CD8-positive, alpha-beta T cell (primary cell): ENCODE measurements at regions of chr3 and their contacts with region 1.

Region 1: DNA sequence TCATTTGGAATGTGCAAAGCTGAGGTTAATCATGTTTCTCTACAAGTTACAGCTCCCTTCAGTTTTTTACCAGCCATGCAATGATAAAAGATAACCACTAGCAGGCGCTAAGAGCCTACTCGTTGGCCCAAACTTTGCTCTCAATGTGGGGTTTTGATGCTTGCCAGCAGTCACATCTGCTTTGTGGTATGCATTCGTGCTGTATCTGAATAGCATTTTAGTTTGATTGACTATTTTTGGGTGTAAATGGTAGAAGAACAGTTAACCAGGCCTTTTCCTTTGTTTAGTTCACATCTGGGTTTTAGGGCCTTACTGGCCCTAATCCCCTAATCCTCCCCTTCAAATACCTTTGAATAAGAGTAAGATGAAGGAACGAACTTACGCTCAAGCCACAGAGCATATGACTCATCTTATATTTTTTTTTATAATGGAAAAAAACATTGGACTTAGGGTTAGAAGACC is 4.4 kb upstream of the CLDN11 start:
- DNase-seq: peak in 6 of 9 experiments; percentile 6 to 64 (median 36)
- ATAC-seq: peak; percentile 75
- H3K4me3 ChIP-seq: no peak overlapping the region
- H3K4me3 Mint-ChIP-seq: no peak overlapping the region
- H3K27ac ChIP-seq: no peak overlapping the region
- H3K27ac Mint-ChIP-seq: no peak overlapping the region
- H3K4me1 ChIP-seq: peaks cover 7% of the 10 kb centered on the region
- H3K4me1 Mint-ChIP-seq: peaks cover 8% of the 10 kb centered on the region
- H3K27me3 ChIP-seq: peaks cover 5 to 8% of the 10 kb centered on the region in 2 experiments
- H3K27me3 Mint-ChIP-seq: peaks cover 23% of the 10 kb centered on the region
- CTCF ChIP-seq: peak; percentile 97

Region 2: GRCh38 chr3:169278092-169278491 is 1136.1 kb before region 1 on chr3:
- CTCF ChIA-PET with region 1: no interaction called
- POLR2A ChIA-PET with region 1: no interaction called
- intact Hi-C with region 1: no loop called
- DNase-seq: no peak
- ATAC-seq: no peak
- H3K4me3 ChIP-seq: no peak overlapping the region
- H3K4me3 Mint-ChIP-seq: no peak overlapping the region
- H3K27ac ChIP-seq: no peak overlapping the region
- H3K27ac Mint-ChIP-seq: no peak overlapping the region
- H3K4me1 ChIP-seq: no peaks in the 10 kb centered on the region
- H3K4me1 Mint-ChIP-seq: no peaks in the 10 kb centered on the region
- H3K27me3 ChIP-seq: no peaks in the 10 kb centered on the region
- H3K27me3 Mint-ChIP-seq: no peaks in the 10 kb centered on the region
- CTCF ChIP-seq: no peak

Region 3: GRCh38 chr3:170178651-170179050 is 235.6 kb before region 1 on chr3:
- CTCF ChIA-PET with region 1: no interaction called
- POLR2A ChIA-PET with region 1: no interaction called
- intact Hi-C with region 1: no loop called
- DNase-seq: peak; percentile 32 to 79 (median 61)
- ATAC-seq: peak; percentile 53
- H3K4me3 ChIP-seq: peak overlapping the region in 1 of 2 experiments; percentile 14
- H3K4me3 Mint-ChIP-seq: peak overlapping the region; percentile 66
- H3K27ac ChIP-seq: peak overlapping the region in 1 of 2 experiments; percentile 99
- H3K27ac Mint-ChIP-seq: peak overlapping the region; percentile 85
- H3K4me1 ChIP-seq: peaks cover 43% of the 10 kb centered on the region
- H3K4me1 Mint-ChIP-seq: peaks cover 54% of the 10 kb centered on the region
- H3K27me3 ChIP-seq: no peaks in the 10 kb centered on the region
- H3K27me3 Mint-ChIP-seq: no peaks in the 10 kb centered on the region
- CTCF ChIP-seq: no peak

Region 4: DNA sequence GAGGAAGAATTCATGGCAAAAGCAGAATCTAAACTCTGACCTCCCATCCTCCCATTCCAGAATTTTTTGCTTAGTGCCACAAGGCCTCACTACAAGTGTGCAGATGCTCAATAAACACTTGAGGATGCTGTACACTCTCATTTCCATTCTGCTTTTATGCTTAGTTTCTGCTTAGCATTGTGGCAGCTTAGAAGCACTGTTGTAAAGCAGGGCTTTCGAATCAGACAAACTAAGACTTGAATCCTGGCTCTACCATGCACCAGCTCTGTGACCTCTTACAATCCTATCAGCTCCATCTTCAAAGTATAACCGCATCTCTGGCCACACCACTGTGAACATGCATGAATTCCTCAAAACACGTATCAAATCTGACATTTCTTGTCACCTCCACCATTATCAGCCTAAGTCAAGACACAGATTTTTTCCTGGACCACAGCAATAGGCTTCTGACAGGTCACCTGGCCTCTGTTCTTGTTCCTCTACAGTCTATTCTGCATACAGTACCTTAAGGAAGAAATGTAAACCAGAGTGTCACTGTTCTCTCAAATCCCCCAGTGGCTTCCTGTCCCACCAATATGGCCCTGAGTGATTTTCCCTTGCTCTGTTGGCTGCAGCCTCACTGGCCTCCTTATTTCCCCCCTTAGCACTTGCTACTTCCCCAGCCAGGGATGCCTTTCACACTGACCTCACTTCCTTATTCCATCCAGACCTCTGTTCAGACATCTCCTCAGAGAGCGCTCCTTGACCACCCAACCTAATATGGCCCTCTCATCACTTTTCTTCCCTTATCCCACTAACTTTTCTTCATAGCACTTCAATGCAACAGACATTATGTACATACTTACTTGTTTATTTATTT is 224.6 kb before region 1 on chr3:
- CTCF ChIA-PET with region 1: interaction called, 6 read pairs
- POLR2A ChIA-PET with region 1: no interaction called
- intact Hi-C with region 1: loop called (anchors 5 kb)
- DNase-seq: no peak
- ATAC-seq: no peak
- H3K4me3 ChIP-seq: no peak overlapping the region
- H3K4me3 Mint-ChIP-seq: no peak overlapping the region
- H3K27ac ChIP-seq: no peak overlapping the region
- H3K27ac Mint-ChIP-seq: no peak overlapping the region
- H3K4me1 ChIP-seq: no peaks in the 10 kb centered on the region
- H3K4me1 Mint-ChIP-seq: peaks cover 8% of the 10 kb centered on the region
- H3K27me3 ChIP-seq: peaks cover 0 to 3% of the 10 kb centered on the region in 2 experiments
- H3K27me3 Mint-ChIP-seq: no peaks in the 10 kb centered on the region
- CTCF ChIP-seq: no peak

Region 5: GRCh38 chr3:170267793-170268192 is 146.4 kb before region 1 on chr3:
- CTCF ChIA-PET with region 1: no interaction called
- POLR2A ChIA-PET with region 1: no interaction called
- intact Hi-C with region 1: no loop called
- DNase-seq: no peak
- ATAC-seq: no peak
- H3K4me3 ChIP-seq: no peak overlapping the region
- H3K4me3 Mint-ChIP-seq: no peak overlapping the region
- H3K27ac ChIP-seq: no peak overlapping the region
- H3K27ac Mint-ChIP-seq: no peak overlapping the region
- H3K4me1 ChIP-seq: no peaks in the 10 kb centered on the region
- H3K4me1 Mint-ChIP-seq: no peaks in the 10 kb centered on the region
- H3K27me3 ChIP-seq: no peaks in the 10 kb centered on the region
- H3K27me3 Mint-ChIP-seq: no peaks in the 10 kb centered on the region
- CTCF ChIP-seq: no peak

Region 6: DNA sequence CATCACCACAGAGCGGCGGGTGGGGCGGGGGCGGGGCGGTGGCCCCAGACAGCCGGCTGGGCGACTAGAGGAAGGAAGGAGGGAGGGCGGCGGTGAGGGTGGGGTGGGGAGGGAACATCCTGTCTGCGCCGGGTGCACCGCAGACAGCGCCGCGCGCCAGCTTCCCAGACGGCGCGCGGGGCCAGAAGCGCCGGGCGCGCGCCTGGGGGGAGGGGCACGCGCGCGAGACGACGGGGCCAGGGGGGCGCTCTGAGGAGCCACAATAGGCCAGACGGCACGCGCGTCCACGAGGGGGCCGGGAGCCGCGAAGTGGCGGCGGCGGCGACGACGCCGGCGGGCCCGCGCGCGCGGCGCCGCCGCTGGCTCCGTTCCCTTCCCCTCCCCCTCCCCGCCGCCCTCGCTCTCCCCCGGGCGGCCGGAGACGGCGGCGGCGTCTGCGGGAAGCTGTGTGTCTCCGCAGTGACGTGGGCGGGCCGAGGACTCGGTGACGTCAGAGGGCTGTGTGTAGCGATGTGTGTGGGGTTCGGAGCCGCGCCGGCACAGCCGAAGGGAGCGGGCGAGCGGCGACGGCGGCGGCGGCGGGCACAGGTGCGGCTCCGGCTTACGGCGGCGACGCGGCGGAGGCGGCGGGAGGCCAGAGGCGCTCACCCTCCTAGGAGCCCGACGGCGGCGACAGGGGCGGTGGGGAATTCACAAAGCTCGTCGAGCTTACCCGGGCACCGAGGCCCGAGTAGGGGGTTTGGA is 56.9 kb before region 1 on chr3 and contains the start of gene SKIL:
- CTCF ChIA-PET with region 1: interaction called, 7 read pairs
- POLR2A ChIA-PET with region 1: no interaction called
- intact Hi-C with region 1: loop called in 1 of 2 experiments (anchors 5 kb)
- DNase-seq: peak; percentile 94 to 99 (median 97)
- ATAC-seq: peak; percentile 69
- H3K4me3 ChIP-seq: peak within 1 kb of the TSS; percentile 55 to 76
- H3K4me3 Mint-ChIP-seq: peak within 1 kb of the TSS; percentile 95
- H3K27ac ChIP-seq: peak within 1 kb of the TSS; percentile 91 to 96
- H3K27ac Mint-ChIP-seq: peak within 1 kb of the TSS; percentile 99
- H3K4me1 ChIP-seq: peaks cover 24% of the 10 kb centered on the region
- H3K4me1 Mint-ChIP-seq: peaks cover 52% of the 10 kb centered on the region
- H3K27me3 ChIP-seq: no peaks in the 10 kb centered on the region
- H3K27me3 Mint-ChIP-seq: no peaks in the 10 kb centered on the region
- CTCF ChIP-seq: no peak
- total RNA-seq, gene SKIL: 160 to 177 TPM

Region 7: DNA sequence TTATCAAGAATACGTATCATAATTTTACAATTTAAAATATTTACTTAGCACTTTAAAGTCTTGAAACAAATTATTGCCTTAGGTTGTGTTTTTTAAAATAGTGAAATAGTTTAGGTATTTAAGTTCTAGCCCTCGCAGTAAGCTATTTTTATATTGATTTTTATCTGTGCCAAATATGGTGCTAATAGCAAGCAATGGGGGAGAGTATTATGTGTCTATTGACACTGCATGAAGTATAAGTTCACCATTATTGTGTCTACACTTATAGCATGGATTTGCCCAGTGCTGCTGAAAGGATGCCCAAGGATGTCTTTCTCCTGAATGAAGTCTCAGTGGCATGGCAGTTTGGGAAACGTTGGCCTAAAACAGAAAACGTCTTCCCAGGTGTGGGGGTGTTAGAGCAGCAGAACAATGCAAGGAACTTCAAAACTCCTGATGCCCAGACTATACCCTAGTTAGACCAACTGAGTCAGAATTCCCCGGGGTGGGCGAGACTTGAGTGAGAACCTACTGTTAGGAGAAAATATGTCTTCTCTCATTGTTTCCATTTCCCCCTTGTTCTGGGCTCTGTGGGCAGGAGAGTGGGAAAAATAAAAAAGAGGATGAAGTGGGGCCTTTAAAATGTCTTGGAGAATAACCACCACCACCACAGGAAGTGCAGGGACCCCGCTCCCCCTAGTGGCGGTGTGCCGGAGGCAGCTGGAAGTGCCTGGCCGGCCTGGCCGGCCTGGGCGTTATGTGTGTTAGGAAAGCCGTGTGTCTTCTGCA is 275.8 kb after region 1 on chr3:
- CTCF ChIA-PET with region 1: no interaction called
- POLR2A ChIA-PET with region 1: no interaction called
- intact Hi-C with region 1: loop called (anchors 1 to 2 kb)
- DNase-seq: peak in 8 of 9 experiments; percentile 17 to 59 (median 28)
- ATAC-seq: no peak
- H3K4me3 ChIP-seq: no peak overlapping the region
- H3K4me3 Mint-ChIP-seq: no peak overlapping the region
- H3K27ac ChIP-seq: no peak overlapping the region
- H3K27ac Mint-ChIP-seq: no peak overlapping the region
- H3K4me1 ChIP-seq: no peaks in the 10 kb centered on the region
- H3K4me1 Mint-ChIP-seq: no peaks in the 10 kb centered on the region
- H3K27me3 ChIP-seq: no peaks in the 10 kb centered on the region
- H3K27me3 Mint-ChIP-seq: no peaks in the 10 kb centered on the region
- CTCF ChIP-seq: peak; percentile 34

Region 8: GRCh38 chr3:171772427-171773056 is 1358.3 kb after region 1 on chr3:
- CTCF ChIA-PET with region 1: interaction called, 5 read pairs
- POLR2A ChIA-PET with region 1: no interaction called
- intact Hi-C with region 1: loop called (anchors 2 to 5 kb)
- DNase-seq: peak in 8 of 9 experiments; percentile 13 to 61 (median 40)
- ATAC-seq: peak; percentile 36
- H3K4me3 ChIP-seq: no peak overlapping the region
- H3K4me3 Mint-ChIP-seq: no peak overlapping the region
- H3K27ac ChIP-seq: no peak overlapping the region
- H3K27ac Mint-ChIP-seq: no peak overlapping the region
- H3K4me1 ChIP-seq: no peaks in the 10 kb centered on the region
- H3K4me1 Mint-ChIP-seq: no peaks in the 10 kb centered on the region
- H3K27me3 ChIP-seq: no peaks in the 10 kb centered on the region
- H3K27me3 Mint-ChIP-seq: peaks cover 5% of the 10 kb centered on the region
- CTCF ChIP-seq: peak; percentile 58